CD4-positive, alpha-beta T cell (primary cell): ENCODE measurements at regions of chr11 and their contacts with region 1.

Region 1: GRCh38 chr11:108008656-108009496 is at the start of gene CUL5:
- DNase-seq: peak; percentile 76 to 95 (median 86)
- ATAC-seq: peak; percentile 86
- H3K4me3 ChIP-seq: peak within 1 kb of the TSS; percentile 89
- H3K4me3 Mint-ChIP-seq: peak within 1 kb of the TSS; percentile 99
- H3K27ac ChIP-seq: peak within 1 kb of the TSS; percentile 91 to 94
- H3K27ac Mint-ChIP-seq: peak within 1 kb of the TSS; percentile 93
- H3K4me1 ChIP-seq: peaks cover 15% of the 10 kb centered on the region
- H3K4me1 Mint-ChIP-seq: peaks cover 16% of the 10 kb centered on the region
- H3K27me3 ChIP-seq: no peaks in the 10 kb centered on the region
- H3K27me3 Mint-ChIP-seq: no peaks in the 10 kb centered on the region
- CTCF ChIP-seq: peak; percentile 86
- total RNA-seq, gene CUL5: 65.5 to 67.6 TPM

Region 2: DNA sequence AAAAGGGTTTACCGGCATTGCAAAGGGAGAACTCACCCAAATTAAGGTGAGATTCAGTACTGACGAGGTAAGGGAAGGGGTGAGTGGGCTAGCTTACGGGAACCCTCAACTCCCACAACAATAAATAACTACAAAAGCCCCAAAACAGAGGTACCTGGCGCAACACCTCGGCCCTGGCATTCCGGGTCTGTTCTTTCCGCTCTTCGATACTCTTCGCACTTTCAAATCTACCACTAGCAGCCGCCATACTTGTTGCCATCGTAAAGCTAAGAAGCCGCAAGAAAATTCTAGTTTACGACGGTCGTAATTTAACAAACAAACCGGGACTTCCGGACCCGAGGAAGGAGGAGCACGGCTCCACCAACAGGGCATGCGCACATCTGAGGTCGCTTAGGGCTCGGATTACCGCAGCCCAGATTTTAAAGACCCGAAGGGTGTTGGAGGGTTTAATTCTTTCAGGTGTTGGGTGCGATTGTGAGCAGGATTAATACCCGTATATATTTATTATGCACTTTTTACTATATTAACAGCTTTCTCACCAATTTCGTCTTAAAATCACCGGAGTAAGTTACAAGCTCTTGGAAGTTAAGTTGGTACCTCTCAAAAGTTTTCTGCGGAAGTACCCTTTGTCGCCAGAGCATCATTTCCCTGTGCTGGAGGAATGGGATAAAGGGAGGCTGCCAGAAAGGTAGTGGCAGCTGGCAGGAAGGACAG is 551.2 kb before region 1 on chr11 and contains the start of gene CWF19L2:
- CTCF ChIA-PET with region 1: interaction called, 6 read pairs
- POLR2A ChIA-PET with region 1: interaction called, 10 read pairs
- intact Hi-C with region 1: loop called in 1 of 2 experiments (anchors 5 kb)
- DNase-seq: peak; percentile 74 to 97 (median 86)
- ATAC-seq: peak; percentile 92
- H3K4me3 ChIP-seq: peak within 1 kb of the TSS; percentile 92
- H3K4me3 Mint-ChIP-seq: peak within 1 kb of the TSS; percentile 91
- H3K27ac ChIP-seq: peak within 1 kb of the TSS; percentile 73 to 79
- H3K27ac Mint-ChIP-seq: peak within 1 kb of the TSS; percentile 82
- H3K4me1 ChIP-seq: peaks cover 7% of the 10 kb centered on the region
- H3K4me1 Mint-ChIP-seq: peaks cover 37% of the 10 kb centered on the region
- H3K27me3 ChIP-seq: no peaks in the 10 kb centered on the region
- H3K27me3 Mint-ChIP-seq: peaks cover 5% of the 10 kb centered on the region
- CTCF ChIP-seq: no peak
- total RNA-seq, gene CWF19L2: 21.2 to 21.8 TPM

Region 3: DNA sequence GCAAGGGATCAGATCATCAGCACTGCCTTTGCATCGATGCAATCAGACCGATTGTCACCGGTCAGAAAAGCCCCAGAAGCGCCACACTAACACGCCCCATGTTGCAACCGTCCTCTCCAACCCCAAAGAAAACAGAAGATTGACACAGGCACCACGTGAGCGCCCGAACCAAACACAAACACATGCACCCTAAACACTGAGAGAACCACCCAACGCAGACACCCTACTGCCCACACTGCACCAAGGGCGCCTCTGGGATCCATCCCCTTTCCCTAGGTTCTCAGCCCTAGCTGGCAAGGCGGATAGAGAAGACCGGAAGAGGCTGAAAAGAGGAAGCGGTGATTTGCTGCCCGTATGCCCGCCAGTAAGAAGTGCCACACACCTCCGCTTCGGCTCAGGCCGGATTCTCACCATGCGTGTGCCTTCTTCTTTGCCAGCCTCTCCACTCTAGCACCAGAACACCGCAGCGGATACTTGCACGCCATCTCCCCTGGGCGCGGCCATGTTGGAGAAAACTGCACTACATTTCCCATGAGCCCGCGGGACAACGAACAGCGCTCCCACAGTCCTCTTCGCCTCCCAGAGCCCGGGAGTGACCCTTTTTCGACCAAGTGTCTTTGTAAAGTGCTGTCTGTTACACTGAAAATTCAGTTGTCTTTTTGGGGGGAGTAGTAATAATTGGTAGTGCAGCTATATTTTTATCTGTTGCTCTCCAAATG is 443.5 kb before region 1 on chr11 and contains the start of gene ALKBH8:
- CTCF ChIA-PET with region 1: interaction called, 4 read pairs
- POLR2A ChIA-PET with region 1: no interaction called
- intact Hi-C with region 1: loop called in 1 of 2 experiments (anchors 5 kb)
- DNase-seq: peak; percentile 62 to 90 (median 72)
- ATAC-seq: peak; percentile 95
- H3K4me3 ChIP-seq: peak within 1 kb of the TSS; percentile 70
- H3K4me3 Mint-ChIP-seq: peak within 1 kb of the TSS; percentile 91
- H3K27ac ChIP-seq: peak within 1 kb of the TSS; percentile 57 to 69
- H3K27ac Mint-ChIP-seq: peak within 1 kb of the TSS; percentile 85
- H3K4me1 ChIP-seq: peaks cover 16% of the 10 kb centered on the region
- H3K4me1 Mint-ChIP-seq: peaks cover 56% of the 10 kb centered on the region
- H3K27me3 ChIP-seq: no peaks in the 10 kb centered on the region
- H3K27me3 Mint-ChIP-seq: no peaks in the 10 kb centered on the region
- CTCF ChIP-seq: no peak
- total RNA-seq, gene ALKBH8: 6.5 to 7.7 TPM

Region 4: DNA sequence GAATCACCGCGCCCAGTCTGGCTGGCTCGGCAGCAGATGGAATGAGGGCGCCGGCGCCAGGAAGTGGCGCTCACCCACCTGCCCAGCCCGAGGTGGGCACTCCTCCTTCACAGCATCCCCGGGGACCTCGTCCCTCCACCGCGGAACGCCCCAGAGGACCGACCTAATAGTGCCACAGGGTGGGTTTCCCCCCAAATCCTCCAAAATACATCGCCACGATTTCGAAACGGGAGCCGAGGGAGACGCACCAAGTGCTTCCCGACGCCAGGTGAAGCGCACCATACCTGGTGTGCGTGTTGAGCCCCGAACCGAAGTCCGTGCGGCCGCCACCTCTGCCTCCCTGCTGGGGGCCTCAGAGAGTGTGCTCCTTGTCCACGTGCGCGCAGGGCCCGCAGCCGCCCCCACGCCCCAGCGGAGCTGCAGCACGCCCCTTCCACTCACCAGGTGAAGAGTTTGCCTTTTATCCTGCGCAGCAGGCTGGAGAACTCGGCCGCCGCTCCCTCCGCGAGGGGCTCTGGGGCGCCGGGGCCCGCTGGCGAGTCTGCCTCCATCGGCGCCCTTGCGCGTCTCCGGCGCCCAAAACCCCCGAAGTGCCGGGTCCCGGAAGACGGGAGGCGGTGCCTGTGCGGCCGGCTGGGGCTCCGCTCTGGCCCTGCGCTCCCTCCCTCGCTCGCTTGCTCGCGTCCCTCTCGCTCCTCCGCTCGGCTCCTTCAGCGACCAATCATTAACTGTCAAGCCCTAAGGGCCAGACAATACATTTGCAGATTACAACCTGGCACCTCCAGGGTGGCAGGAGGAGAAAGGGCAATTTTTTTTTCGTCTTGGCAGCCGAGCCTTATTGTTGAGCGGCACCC is 150.4 kb before region 1 on chr11 and contains the start of gene SLC35F2:
- CTCF ChIA-PET with region 1: no interaction called
- POLR2A ChIA-PET with region 1: interaction called, 3 read pairs
- intact Hi-C with region 1: loop called in 1 of 2 experiments (anchors 10 kb)
- DNase-seq: peak; percentile 15 to 86 (median 58)
- ATAC-seq: peak; percentile 73
- H3K4me3 ChIP-seq: peak within 1 kb of the TSS; percentile 94
- H3K4me3 Mint-ChIP-seq: peak within 1 kb of the TSS; percentile 100
- H3K27ac ChIP-seq: no peak within 1 kb of the TSS
- H3K27ac Mint-ChIP-seq: peak within 1 kb of the TSS; percentile 85
- H3K4me1 ChIP-seq: peaks cover 26% of the 10 kb centered on the region
- H3K4me1 Mint-ChIP-seq: peaks cover 28% of the 10 kb centered on the region
- H3K27me3 ChIP-seq: no peaks in the 10 kb centered on the region
- H3K27me3 Mint-ChIP-seq: no peaks in the 10 kb centered on the region
- CTCF ChIP-seq: no peak
- total RNA-seq, gene SLC35F2: 2.8 to 3.0 TPM

Region 5: DNA sequence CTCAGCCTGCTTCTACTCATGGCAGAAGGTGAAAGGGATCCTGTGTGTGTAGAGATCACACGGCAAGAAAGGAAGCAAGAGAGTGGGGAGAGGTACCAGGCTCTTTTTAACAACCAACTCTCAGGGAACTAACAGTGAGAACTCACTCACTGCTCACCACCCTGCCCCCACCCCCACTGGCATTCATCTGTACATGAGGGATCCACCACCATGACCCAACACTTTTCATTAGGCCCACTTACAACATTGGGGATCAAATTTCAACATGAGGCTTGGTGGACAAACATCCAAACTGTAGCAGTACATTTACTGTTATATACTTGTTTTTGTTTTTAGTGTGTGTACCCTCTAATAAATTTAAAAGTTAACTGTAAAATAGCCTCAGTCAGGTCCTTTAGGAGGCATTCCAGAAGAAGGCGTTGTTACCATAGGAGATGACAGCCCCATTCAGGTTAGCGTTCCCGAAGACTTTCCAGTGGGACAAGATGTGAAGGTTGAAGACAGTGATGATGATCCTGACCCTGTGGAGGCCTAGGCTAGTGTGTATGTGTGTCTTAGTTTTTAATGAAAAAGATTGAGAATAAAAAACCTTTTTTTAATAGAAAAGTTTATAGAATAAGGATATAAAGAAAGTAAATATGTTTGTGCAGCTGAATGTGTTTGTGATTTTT is 11.1 kb after region 1 on chr11:
- CTCF ChIA-PET with region 1: interaction called, 11 read pairs
- POLR2A ChIA-PET with region 1: no interaction called
- intact Hi-C with region 1: no loop called
- DNase-seq: no peak
- ATAC-seq: no peak
- H3K4me3 ChIP-seq: no peak overlapping the region
- H3K4me3 Mint-ChIP-seq: no peak overlapping the region
- H3K27ac ChIP-seq: no peak overlapping the region
- H3K27ac Mint-ChIP-seq: no peak overlapping the region
- H3K4me1 ChIP-seq: peaks cover 22% of the 10 kb centered on the region
- H3K4me1 Mint-ChIP-seq: peaks cover 93% of the 10 kb centered on the region
- H3K27me3 ChIP-seq: no peaks in the 10 kb centered on the region
- H3K27me3 Mint-ChIP-seq: no peaks in the 10 kb centered on the region
- CTCF ChIP-seq: no peak

Region 6: DNA sequence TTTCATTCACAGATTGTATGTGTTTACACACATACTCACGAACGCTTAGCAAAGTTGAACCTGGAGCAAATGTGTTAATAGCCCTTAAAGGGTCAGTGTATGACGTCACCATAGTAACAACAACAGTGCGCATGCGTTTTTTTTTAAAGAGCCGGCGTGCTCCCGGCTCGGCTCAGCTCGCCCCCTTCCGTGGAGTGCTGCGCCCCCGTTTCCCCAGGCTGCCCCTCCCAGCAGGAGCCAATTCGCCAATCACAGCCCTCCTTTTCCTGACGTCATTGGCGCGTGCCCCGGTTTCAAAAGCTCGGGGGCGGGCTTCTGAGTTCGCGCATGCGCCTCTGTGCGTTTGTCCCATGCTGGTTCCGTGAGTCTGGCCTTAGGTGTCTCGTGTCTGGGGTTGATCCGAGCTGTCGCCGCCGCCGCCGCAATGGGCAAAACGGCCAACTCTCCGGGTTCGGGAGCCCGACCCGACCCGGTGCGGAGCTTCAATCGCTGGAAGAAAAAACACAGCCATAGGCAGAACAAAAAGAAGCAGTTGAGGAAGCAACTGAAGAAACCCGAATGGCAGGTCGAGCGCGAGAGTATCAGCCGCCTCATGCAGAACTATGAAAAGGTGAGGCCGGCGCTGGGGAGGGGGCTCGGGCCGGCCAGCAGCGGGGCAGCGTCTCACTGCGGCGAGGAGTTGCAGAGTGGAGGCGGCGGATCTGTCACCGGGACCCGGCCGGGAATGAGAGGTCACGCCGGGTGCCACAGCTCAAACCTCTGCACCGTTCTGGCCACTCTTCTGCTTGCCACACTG is 656.1 kb after region 1 on chr11 and contains the start of gene DDX10:
- CTCF ChIA-PET with region 1: interaction called, 9 read pairs
- POLR2A ChIA-PET with region 1: interaction called, 12 read pairs
- intact Hi-C with region 1: no loop called
- DNase-seq: peak; percentile 96 to 99 (median 98)
- ATAC-seq: peak; percentile 99
- H3K4me3 ChIP-seq: peak within 1 kb of the TSS; percentile 72
- H3K4me3 Mint-ChIP-seq: peak within 1 kb of the TSS; percentile 98
- H3K27ac ChIP-seq: peak within 1 kb of the TSS; percentile 32 to 55
- H3K27ac Mint-ChIP-seq: peak within 1 kb of the TSS; percentile 89
- H3K4me1 ChIP-seq: peaks cover 19% of the 10 kb centered on the region
- H3K4me1 Mint-ChIP-seq: peaks cover 42% of the 10 kb centered on the region
- H3K27me3 ChIP-seq: no peaks in the 10 kb centered on the region
- H3K27me3 Mint-ChIP-seq: no peaks in the 10 kb centered on the region
- CTCF ChIP-seq: no peak
- total RNA-seq, gene DDX10: 15.0 to 15.4 TPM